MCF 10A (cell line): ENCODE measurements at regions of chr14 and their contacts with region 1.

Region 1: DNA sequence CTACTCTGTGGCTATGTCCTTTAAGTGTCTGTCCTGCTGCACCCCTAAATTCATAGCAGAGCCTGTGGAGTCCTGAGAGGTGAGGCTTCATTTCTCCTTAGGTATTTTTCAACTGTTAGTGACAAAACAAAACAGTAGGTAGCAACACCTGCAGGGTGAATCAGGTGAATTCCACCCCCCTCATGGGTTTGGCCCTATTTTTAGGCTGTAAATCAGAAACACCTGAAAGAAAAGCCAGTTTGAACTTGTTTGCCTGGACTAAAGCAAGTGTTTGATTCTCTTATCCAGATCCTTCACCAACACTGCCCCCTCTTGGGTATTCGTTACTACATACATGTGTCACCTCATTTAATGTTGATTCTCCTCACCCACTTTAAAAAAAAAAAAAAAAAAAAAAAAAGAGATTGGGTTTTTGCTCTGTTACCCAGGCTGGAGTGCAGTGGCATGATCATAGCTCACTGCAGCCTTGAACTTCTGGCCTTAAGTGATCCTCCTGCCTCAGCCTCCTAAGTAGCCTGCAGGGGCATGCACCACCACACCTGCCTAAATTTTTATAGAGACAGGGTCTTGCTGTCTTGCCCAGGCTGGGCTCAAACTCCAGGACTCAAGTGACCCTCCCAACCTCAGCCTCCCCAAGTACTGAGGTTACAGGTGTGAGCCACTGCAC is 10.3 kb downstream of the TBPL2 start:
- DNase-seq: peak; percentile 87
- H3K4me3 Mint-ChIP-seq: no peak overlapping the region
- H3K27ac Mint-ChIP-seq: peak overlapping the region; percentile 46
- H3K4me1 Mint-ChIP-seq: peaks cover 16% of the 10 kb centered on the region
- H3K27me3 Mint-ChIP-seq: no peaks in the 10 kb centered on the region
- CTCF ChIP-seq: peak; percentile 42

Region 2: DNA sequence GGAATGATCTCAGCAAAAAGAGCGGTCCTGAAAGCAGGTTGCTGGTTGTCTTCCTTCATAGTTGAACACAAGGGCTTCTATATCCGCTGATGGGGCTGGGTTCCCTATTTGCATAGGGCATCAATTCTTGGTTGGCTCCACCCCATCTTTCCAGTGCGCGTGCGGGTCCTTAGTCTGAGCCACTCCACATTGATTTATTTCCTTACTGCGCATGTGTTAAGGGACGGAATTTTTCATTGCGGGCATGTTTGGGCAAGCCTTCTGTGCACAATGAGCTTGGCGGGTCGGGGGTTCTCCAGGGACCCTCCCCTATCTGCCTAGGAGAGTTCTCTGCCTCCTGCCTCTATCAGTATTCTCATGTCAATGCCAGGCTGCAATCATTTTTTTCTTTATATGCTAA is 217.5 kb before region 1 on chr14:
- CTCF ChIA-PET with region 1: interaction called, 17 read pairs
- POLR2A ChIA-PET with region 1: interaction called, 3 read pairs
- intact Hi-C with region 1: loop called (anchors 1 kb)
- DNase-seq: peak; percentile 82
- H3K4me3 Mint-ChIP-seq: peak overlapping the region; percentile 16
- H3K27ac Mint-ChIP-seq: peak overlapping the region; percentile 87
- H3K4me1 Mint-ChIP-seq: peaks cover 14% of the 10 kb centered on the region
- H3K27me3 Mint-ChIP-seq: no peaks in the 10 kb centered on the region
- CTCF ChIP-seq: no peak

Region 3: DNA sequence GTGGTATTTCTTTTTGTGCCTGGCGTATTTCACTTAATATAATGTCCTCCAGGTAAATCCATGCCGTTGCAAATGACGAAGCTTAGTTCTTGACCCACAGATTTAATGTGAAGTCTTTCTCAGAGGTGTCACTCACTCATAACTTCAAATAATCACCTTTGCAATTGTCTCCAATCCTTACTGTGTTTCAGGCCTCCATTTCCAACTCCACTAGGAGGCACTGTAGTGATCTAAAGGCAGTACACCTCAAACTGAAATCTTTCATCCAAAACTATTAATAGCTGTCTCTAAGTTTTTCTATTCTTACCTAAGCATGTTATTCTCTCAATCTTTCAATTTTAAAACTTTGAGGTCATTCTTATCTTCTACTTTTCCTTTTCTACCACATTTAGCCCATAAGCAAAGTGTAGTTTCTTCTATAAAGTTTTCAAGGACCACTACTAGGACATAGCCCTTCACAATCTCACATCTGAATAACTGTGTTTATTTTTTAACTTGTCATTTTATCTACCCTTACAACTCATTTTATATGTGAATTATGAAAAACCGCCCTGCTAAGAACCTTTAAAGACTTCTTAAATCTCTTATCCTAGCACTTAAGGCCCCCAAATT is 184.4 kb before region 1 on chr14:
- CTCF ChIA-PET with region 1: interaction called, 4 read pairs
- POLR2A ChIA-PET with region 1: no interaction called
- intact Hi-C with region 1: loop called (anchors 1 kb)
- DNase-seq: peak; percentile 49
- H3K4me3 Mint-ChIP-seq: no peak overlapping the region
- H3K27ac Mint-ChIP-seq: no peak overlapping the region
- H3K4me1 Mint-ChIP-seq: no peaks in the 10 kb centered on the region
- H3K27me3 Mint-ChIP-seq: peaks cover 43% of the 10 kb centered on the region
- CTCF ChIP-seq: peak; percentile 40

Region 4: GRCh38 chr14:55327179-55327578 is 103.0 kb before region 1 on chr14:
- CTCF ChIA-PET with region 1: no interaction called
- POLR2A ChIA-PET with region 1: no interaction called
- intact Hi-C with region 1: no loop called
- DNase-seq: no peak
- H3K4me3 Mint-ChIP-seq: no peak overlapping the region
- H3K27ac Mint-ChIP-seq: no peak overlapping the region
- H3K4me1 Mint-ChIP-seq: peaks cover 3% of the 10 kb centered on the region
- H3K27me3 Mint-ChIP-seq: no peaks in the 10 kb centered on the region
- CTCF ChIP-seq: no peak

Region 5: GRCh38 chr14:55411426-55412389 is 18.4 kb before region 1 on chr14 and contains the start of gene ATG14:
- CTCF ChIA-PET with region 1: interaction called, 38 read pairs
- POLR2A ChIA-PET with region 1: interaction called, 22 read pairs
- intact Hi-C with region 1: no loop called
- DNase-seq: peak; percentile 83
- H3K4me3 Mint-ChIP-seq: peak within 1 kb of the TSS; percentile 85
- H3K27ac Mint-ChIP-seq: peak within 1 kb of the TSS; percentile 96
- H3K4me1 Mint-ChIP-seq: peaks cover 23% of the 10 kb centered on the region
- H3K27me3 Mint-ChIP-seq: peaks cover 20% of the 10 kb centered on the region
- CTCF ChIP-seq: no peak
- total RNA-seq, gene ATG14: 6.5 and 6.6 TPM in 2 replicates

Region 6: DNA sequence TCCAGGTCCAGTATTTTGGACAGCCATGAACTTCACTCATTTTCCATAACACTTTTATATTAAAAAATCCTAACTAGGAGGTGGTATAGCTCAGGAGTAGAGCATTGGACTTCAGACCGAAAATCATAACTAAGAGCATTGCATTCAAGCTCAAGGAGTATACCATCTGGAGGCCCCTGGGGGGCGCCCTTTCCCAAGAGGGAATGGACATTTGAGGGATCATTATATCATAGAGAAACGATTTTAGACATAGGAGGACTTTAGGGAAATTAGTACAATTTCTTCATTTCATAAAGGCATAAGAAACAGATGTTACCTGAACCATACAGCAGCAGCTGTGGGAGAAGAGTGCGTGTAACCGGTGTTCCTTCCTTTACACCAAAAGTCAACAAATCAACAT is 13.3 kb before region 1 on chr14:
- CTCF ChIA-PET with region 1: interaction called, 38 read pairs
- POLR2A ChIA-PET with region 1: interaction called, 22 read pairs
- intact Hi-C with region 1: no loop called
- DNase-seq: peak; percentile 60
- H3K4me3 Mint-ChIP-seq: no peak overlapping the region
- H3K27ac Mint-ChIP-seq: no peak overlapping the region
- H3K4me1 Mint-ChIP-seq: peaks cover 8% of the 10 kb centered on the region
- H3K27me3 Mint-ChIP-seq: peaks cover 22% of the 10 kb centered on the region
- CTCF ChIP-seq: peak; percentile 33

Region 7: DNA sequence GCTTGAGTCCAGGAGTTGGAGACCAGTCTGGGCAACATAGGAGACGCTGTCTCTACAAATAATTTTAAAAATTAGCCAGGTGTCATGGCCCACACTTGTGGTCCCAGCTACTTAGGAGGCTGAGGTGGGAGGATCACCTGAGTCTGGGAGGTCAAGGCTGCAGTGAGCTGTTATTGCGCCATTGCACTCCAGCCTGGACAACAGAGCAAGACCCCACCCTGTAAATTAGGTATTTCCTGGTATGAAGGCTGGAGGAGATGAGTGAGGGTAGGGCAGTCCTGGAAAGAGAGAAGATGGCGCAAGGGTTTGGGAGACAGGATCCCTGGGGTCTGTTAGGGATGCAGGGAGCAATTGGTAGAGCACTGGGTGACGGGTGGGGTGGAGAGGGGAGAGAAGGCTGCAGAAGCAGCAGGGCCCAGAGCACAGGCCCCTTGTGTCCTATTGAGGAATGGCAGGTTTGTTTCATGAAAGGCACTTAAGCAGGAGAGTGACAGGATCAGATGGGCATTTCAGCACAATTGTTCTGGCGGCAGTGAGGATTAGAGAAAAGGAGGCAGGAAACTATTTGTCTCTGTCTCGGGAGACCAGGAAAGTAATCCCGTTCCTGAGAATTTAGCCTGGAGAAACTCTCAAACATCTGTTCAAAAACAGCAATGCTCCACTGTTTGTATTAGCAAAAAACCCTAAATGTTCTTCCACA is 102.6 kb after region 1 on chr14:
- CTCF ChIA-PET with region 1: no interaction called
- POLR2A ChIA-PET with region 1: no interaction called
- intact Hi-C with region 1: no loop called
- DNase-seq: no peak
- H3K4me3 Mint-ChIP-seq: no peak overlapping the region
- H3K27ac Mint-ChIP-seq: no peak overlapping the region
- H3K4me1 Mint-ChIP-seq: peaks cover 5% of the 10 kb centered on the region
- H3K27me3 Mint-ChIP-seq: no peaks in the 10 kb centered on the region
- CTCF ChIP-seq: no peak

Region 8: GRCh38 chr14:55546212-55546874 is 116.2 kb after region 1 on chr14:
- CTCF ChIA-PET with region 1: no interaction called
- POLR2A ChIA-PET with region 1: no interaction called
- intact Hi-C with region 1: no loop called
- DNase-seq: no peak
- H3K4me3 Mint-ChIP-seq: no peak overlapping the region
- H3K27ac Mint-ChIP-seq: no peak overlapping the region
- H3K4me1 Mint-ChIP-seq: peaks cover 5% of the 10 kb centered on the region
- H3K27me3 Mint-ChIP-seq: no peaks in the 10 kb centered on the region
- CTCF ChIP-seq: no peak